ENCODE measurements at regions of chr16 and their contacts with region 1.

Region 1: DNA sequence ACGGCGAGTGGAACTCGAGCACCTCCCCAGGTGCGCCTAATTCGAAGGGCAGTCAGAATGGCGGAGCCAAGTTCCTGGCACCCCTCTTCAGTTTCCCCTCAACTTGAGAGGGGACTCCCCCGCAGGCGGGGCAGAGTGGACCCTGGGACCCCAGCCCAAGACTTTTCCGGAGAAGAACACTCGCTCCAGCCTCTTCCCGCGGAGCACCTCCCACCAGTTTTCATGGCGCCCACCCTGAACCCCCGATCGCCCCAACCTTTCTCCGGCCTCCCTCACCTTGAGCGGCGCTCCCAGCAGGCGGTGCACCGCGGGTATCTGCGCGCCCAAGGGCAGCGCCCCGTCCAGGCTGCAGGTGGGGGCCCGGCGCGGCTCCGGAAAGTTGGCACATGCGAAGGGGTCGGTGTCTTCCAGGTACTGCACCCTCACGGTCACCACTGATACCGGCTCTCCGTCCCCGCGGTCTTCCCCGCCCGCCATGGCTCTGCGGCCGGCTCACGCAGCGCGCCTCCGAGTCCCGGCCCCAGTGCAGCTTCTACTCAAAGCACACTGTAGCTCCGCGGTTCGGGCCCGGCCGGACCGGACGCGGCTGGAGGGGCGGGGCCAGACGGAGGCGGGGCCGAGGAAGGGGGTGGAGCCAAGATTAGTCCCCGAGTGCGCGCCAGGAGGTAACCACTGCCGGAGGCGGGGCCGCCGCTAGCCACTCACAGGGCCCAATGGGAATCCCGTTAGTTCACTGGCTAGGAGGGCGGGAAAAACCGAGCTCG is at the start of gene FHOD1:
- DNase-seq: peak; percentile 98
- H3K4me3 ChIP-seq: peak within 1 kb of the TSS; percentile 60 to 89 (median 83)
- H3K27ac ChIP-seq: peak within 1 kb of the TSS; percentile 88
- H3K4me1 ChIP-seq: peaks cover 50% of the 10 kb centered on the region
- H3K27me3 ChIP-seq: peaks cover 0 to 3% of the 10 kb centered on the region in 2 experiments
- CTCF ChIP-seq: no peak
- POLR2A ChIP-seq: peak; percentile 93
- total RNA-seq, gene FHOD1: 104 and 124 TPM in 2 replicates

Region 2: DNA sequence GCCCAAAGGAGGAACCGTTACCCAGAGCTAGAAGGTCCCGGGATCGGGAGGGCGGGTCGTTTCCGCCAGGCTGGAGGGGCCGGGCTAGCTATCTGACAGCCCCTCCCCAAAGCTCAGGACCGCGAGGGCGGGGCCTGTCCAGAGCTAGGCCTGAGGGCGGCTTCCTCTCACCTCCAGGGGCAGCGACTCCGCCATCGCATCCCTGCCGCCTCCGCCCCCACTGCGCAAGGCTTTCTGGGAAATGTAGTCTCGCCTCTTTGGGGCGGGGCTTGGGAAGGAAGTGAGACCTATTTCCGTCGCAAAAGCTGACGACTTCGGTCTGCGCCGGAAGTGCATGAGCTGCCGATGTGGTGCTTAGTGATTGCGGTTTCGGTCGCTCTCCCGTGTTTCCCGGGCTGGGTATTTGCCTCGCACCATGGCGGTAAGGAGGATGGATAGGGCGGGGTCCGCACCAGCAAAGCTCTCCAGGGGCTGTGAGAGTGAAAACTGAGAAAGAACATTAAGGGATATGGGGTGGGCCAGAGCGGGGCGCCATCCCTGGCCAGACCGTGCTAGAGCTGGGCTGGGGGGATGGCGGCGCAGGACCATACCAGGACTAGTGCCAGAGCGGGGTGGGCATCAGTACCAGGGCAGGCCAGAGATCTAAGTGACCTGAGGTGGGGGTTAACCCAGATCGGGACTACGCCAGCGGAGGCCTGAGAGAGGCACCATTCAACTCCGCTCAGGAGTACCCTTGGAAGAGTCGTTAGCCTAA is 20.1 kb before region 1 on chr16 and contains the start of gene TMEM208:
- CTCF ChIA-PET with region 1: interaction called, 10 read pairs
- POLR2A ChIA-PET with region 1: interaction called, 10 read pairs
- dilution Hi-C with region 1: no loop called
- intact Hi-C with region 1: loop called (anchors 1 kb)
- DNase-seq: peak; percentile 98
- H3K4me3 ChIP-seq: peak within 1 kb of the TSS; percentile 66 to 86 (median 78)
- H3K27ac ChIP-seq: peak within 1 kb of the TSS; percentile 44
- H3K4me1 ChIP-seq: peaks cover 18% of the 10 kb centered on the region
- H3K27me3 ChIP-seq: no peaks in the 10 kb centered on the region
- CTCF ChIP-seq: peak in 1 of 2 donors; percentile 21
- POLR2A ChIP-seq: peak; percentile 81
- total RNA-seq, gene TMEM208: 35.3 and 36.3 TPM in 2 replicates

Region 3: GRCh38 chr16:67260426-67261075 is 13.4 kb after region 1 on chr16:
- CTCF ChIA-PET with region 1: interaction called, 18 read pairs
- POLR2A ChIA-PET with region 1: interaction called, 3 read pairs
- dilution Hi-C with region 1: no loop called
- intact Hi-C with region 1: loop called (anchors 1 kb)
- DNase-seq: peak; percentile 24
- H3K4me3 ChIP-seq: no peak overlapping the region
- H3K27ac ChIP-seq: no peak overlapping the region
- H3K4me1 ChIP-seq: peaks cover 4% of the 10 kb centered on the region
- H3K27me3 ChIP-seq: no peaks in the 10 kb centered on the region
- CTCF ChIP-seq: peak; percentile 44 to 51
- POLR2A ChIP-seq: no peak

Region 4: GRCh38 chr16:67279296-67280089 is 32.4 kb after region 1 on chr16 and contains the start of gene PLEKHG4:
- CTCF ChIA-PET with region 1: interaction called, 6 read pairs
- POLR2A ChIA-PET with region 1: interaction called, 5 read pairs
- dilution Hi-C with region 1: no loop called
- intact Hi-C with region 1: loop called (anchors 1 kb)
- DNase-seq: peak; percentile 71
- H3K4me3 ChIP-seq: peak within 1 kb of the TSS; percentile 16 to 60 (median 51)
- H3K27ac ChIP-seq: peak within 1 kb of the TSS; percentile 78
- H3K4me1 ChIP-seq: peaks cover 21% of the 10 kb centered on the region
- H3K27me3 ChIP-seq: no peaks in the 10 kb centered on the region
- CTCF ChIP-seq: peak; percentile 73
- POLR2A ChIP-seq: no peak
- total RNA-seq, gene PLEKHG4: 23.9 and 26.6 TPM in 2 replicates

Measured in endothelial cell of umbilical vein (primary cell).